CD4-positive, alpha-beta memory T cell (primary cell): ENCODE measurements at regions of chr20 and their contacts with region 1.

Region 1: DNA sequence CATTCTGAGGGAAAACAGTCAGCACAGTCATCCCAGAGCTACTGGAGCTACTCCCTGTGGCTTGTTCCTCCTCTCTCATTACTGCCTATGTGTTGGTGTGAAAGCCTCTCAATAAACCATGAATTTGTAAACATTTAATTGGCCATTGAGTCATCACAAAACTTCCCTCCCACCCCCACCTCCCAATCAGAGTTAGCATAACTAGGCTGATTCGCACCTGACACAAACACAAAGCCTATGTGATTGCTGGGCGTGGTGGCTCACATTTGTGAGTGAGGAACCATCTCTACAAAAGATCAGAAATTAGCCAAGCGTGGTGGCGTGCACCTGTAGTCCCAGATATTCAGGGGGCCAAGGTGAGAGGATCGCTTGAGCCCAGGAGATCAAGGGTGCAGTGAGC is 17.1 kb upstream of the SNTA1 start:
- DNase-seq: no peak
- H3K4me3 ChIP-seq: no peak overlapping the region
- H3K4me3 Mint-ChIP-seq: no peak overlapping the region
- H3K27ac ChIP-seq: no peak overlapping the region
- H3K27ac Mint-ChIP-seq: no peak overlapping the region
- H3K4me1 ChIP-seq: no peaks in the 10 kb centered on the region
- H3K4me1 Mint-ChIP-seq: peaks cover 0 to 2% (median 0%) of the 10 kb centered on the region in 4 donors
- H3K27me3 ChIP-seq: no peaks in the 10 kb centered on the region
- H3K27me3 Mint-ChIP-seq: no peaks in the 10 kb centered on the region

Region 2: GRCh38 chr20:33515569-33516216 is 55.0 kb after region 1 on chr20:
- CTCF ChIA-PET with region 1: no interaction called
- POLR2A ChIA-PET with region 1: no interaction called
- intact Hi-C with region 1: no loop called
- DNase-seq: no peak
- H3K4me3 ChIP-seq: no peak overlapping the region
- H3K4me3 Mint-ChIP-seq: no peak overlapping the region
- H3K27ac ChIP-seq: no peak overlapping the region
- H3K27ac Mint-ChIP-seq: no peak overlapping the region
- H3K4me1 ChIP-seq: no peaks in the 10 kb centered on the region
- H3K4me1 Mint-ChIP-seq: peaks cover 15 to 32% (median 20%) of the 10 kb centered on the region in 4 donors
- H3K27me3 ChIP-seq: no peaks in the 10 kb centered on the region
- H3K27me3 Mint-ChIP-seq: no peaks in the 10 kb centered on the region

Region 3: GRCh38 chr20:33653218-33653899 is 192.6 kb after region 1 on chr20:
- CTCF ChIA-PET with region 1: interaction called, 9 read pairs
- POLR2A ChIA-PET with region 1: no interaction called
- intact Hi-C with region 1: loop called (anchors 1 kb)
- DNase-seq: peak in 2 of 5 donors; percentile 20 to 32
- H3K4me3 ChIP-seq: no peak overlapping the region
- H3K4me3 Mint-ChIP-seq: no peak overlapping the region
- H3K27ac ChIP-seq: no peak overlapping the region
- H3K27ac Mint-ChIP-seq: peak overlapping the region in 3 of 7 donors; percentile 56 to 75 (median 68)
- H3K4me1 ChIP-seq: no peaks in the 10 kb centered on the region
- H3K4me1 Mint-ChIP-seq: peaks cover 5 to 18% (median 9%) of the 10 kb centered on the region in 4 donors
- H3K27me3 ChIP-seq: no peaks in the 10 kb centered on the region
- H3K27me3 Mint-ChIP-seq: no peaks in the 10 kb centered on the region

Region 4: GRCh38 chr20:34129518-34130162 is 668.9 kb after region 1 on chr20:
- CTCF ChIA-PET with region 1: no interaction called
- POLR2A ChIA-PET with region 1: no interaction called
- intact Hi-C with region 1: loop called (anchors 1 kb)
- DNase-seq: peak; percentile 65 to 74 (median 71)
- H3K4me3 ChIP-seq: no peak overlapping the region
- H3K4me3 Mint-ChIP-seq: peak overlapping the region in 6 of 8 donors; percentile 3 to 77 (median 36)
- H3K27ac ChIP-seq: no peak overlapping the region
- H3K27ac Mint-ChIP-seq: no peak overlapping the region
- H3K4me1 ChIP-seq: peaks cover 4% of the 10 kb centered on the region
- H3K4me1 Mint-ChIP-seq: peaks cover 4 to 6% (median 4%) of the 10 kb centered on the region in 4 donors
- H3K27me3 ChIP-seq: no peaks in the 10 kb centered on the region
- H3K27me3 Mint-ChIP-seq: peaks cover 4 to 6% of the 10 kb centered on the region in 2 donors